Right ventricle myocardium inferior (tissue), 1 donor: ENCODE measurements at regions of chr2 and their contacts with region 1.

Region 1: GRCh38 chr2:44715671-44716081 is 225.8 kb upstream of the SIX3 start:
- DNase-seq: no peak
- ATAC-seq: peak; percentile 63

Region 2: DNA sequence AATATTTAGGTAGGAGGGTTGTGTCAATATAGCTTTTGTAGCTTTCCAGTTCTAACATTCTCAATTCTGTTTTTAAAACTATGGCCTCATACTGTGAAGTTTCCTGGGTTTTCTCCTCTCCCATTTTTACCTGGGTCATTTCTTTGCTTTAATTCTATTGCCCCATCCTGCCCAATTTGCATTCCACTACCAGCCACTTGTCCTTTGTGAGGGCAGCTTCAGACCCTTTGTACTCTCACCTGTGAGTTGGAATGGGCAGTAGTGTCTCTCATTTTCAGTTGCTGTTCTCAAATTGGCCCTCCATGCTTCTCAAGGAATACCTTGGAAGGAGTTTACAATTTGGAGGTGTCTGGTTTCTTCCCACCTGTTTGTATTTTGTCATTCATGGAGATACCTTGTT is 245.5 kb before region 1 on chr2:
- intact Hi-C with region 1: loop called (anchors 5 kb)
- DNase-seq: no peak
- ATAC-seq: no peak

Region 3: DNA sequence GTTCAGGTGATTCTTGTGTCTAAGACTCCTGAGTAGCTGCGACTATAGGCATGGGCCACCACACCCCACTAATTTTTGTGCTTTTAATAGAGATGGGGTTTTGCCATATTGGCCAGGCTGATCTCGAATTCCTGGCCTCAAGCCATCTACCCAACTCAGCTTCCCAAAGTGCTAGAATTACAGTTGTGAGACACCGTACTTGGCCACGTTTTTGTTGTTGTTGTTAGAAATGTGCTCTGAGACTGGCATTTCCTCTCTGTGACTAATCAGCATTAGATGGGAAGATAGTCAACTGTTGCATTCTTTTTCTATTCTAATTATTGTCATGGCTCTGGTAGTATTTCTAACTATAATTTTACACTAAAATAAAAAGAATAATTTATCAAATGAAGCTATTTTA is 162.2 kb before region 1 on chr2:
- intact Hi-C with region 1: loop called (anchors 10 kb)
- DNase-seq: no peak
- ATAC-seq: no peak